Tibial artery (tissue), 4 donors: ENCODE measurements at regions of chr6 and their contacts with region 1.

Region 1: GRCh38 chr6:155762649-155763048 is 307.0 kb upstream of the NOX3 start:
- DNase-seq: no peak
- H3K4me3 ChIP-seq: no peak overlapping the region
- H3K27ac ChIP-seq: no peak overlapping the region
- H3K4me1 ChIP-seq: peaks cover 0 to 9% (median 0%) of the 10 kb centered on the region in 4 donors
- H3K27me3 ChIP-seq: no peaks in the 10 kb centered on the region
- CTCF ChIP-seq: no peak

Region 2: DNA sequence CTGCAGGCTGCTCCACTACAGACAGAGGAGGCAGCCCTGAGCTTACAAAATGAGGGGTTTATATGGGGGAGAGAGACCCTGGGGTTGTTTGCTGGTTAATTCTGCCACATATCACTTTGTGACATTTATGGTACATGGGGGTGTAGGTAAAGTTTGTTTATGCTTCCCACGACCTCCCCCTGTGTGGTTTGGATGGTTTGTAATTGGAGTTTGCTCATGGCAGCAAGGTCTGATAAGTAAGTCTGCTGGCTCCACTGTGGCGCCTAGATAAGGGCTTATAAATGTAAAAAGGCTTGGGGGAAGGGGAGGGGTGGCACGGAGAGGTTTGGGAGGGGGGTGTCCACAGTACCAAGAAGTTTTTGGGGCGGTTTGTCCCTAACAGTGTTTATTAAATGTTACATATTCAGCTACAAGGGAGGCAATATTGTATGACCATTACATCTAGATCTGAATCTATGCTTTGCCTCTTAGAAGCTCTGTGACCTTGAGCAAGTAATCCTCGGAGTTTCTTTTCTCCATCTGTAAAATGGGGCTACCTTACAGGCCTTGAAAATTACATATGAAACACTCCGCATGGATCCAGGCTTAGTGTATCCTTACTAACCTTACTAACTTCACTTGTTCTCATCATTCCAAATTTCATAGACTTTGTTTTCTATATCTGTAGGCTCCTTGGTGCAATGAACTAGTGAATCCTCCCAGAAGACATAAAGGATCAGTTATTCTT is 102.2 kb before region 1 on chr6:
- intact Hi-C with region 1: no loop called
- DNase-seq: no peak
- H3K4me3 ChIP-seq: no peak overlapping the region
- H3K27ac ChIP-seq: no peak overlapping the region
- H3K4me1 ChIP-seq: no peaks in the 10 kb centered on the region
- H3K27me3 ChIP-seq: no peaks in the 10 kb centered on the region
- CTCF ChIP-seq: no peak

Region 3: GRCh38 chr6:155818698-155819097 is 56.0 kb after region 1 on chr6:
- intact Hi-C with region 1: loop called (anchors 2 kb)
- DNase-seq: no peak
- H3K4me3 ChIP-seq: no peak overlapping the region
- H3K27ac ChIP-seq: no peak overlapping the region
- H3K4me1 ChIP-seq: no peaks in the 10 kb centered on the region
- H3K27me3 ChIP-seq: no peaks in the 10 kb centered on the region
- CTCF ChIP-seq: no peak